AG04450 (cell line): ENCODE measurements at regions of chr11 and their contacts with region 1.

Region 1: DNA sequence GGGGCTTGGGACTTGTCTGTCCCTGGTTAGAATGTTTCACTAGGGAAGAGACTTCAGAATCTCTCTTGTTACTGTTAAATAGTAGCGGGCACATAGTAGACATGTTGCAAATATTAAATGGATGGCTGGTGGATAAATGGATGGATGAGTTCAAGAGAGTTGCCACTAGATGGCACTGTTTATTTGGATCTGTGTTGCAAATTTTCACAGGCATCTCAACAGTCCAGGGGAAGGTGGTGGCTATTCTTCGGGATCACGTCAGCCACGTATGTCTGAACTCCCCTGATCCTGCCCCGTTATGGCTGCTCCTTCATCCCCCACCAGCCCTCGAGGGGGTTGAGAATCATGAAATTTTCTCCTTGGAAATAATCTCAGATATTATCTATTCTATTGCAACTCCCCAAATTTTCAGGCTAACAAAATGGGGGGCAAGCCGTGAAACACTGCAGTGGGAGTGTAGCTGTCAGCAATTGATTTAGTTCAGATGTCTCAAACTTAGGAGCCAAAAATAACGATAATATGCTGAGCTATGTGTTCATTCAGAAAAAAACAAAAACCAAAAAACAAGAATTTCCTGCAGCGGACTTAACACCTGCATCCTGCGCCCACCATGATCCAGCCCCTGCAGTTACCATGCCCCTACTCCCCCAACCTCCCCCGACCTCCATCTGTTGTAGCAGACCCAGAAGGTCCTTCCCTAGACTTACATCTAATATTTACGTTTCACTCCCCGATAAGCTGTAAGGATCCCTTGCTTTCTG is 29.1 kb upstream of the BIRC3 start:
- DNase-seq: peak; percentile 55
- H3K4me3 ChIP-seq: peak overlapping the region; percentile 38
- H3K27ac ChIP-seq: no peak overlapping the region
- H3K27me3 ChIP-seq: no peaks in the 10 kb centered on the region
- CTCF ChIP-seq: peak; percentile 72

Region 2: GRCh38 chr11:102187416-102188151 is 100.6 kb before region 1 on chr11:
- CTCF ChIA-PET with region 1: no interaction called
- POLR2A ChIA-PET with region 1: no interaction called
- DNase-seq: no peak
- H3K4me3 ChIP-seq: no peak overlapping the region
- H3K27ac ChIP-seq: no peak overlapping the region
- H3K27me3 ChIP-seq: no peaks in the 10 kb centered on the region
- CTCF ChIP-seq: no peak

Region 3: GRCh38 chr11:102244681-102245409 is 43.3 kb before region 1 on chr11:
- CTCF ChIA-PET with region 1: no interaction called
- POLR2A ChIA-PET with region 1: no interaction called
- DNase-seq: no peak
- H3K4me3 ChIP-seq: no peak overlapping the region
- H3K27ac ChIP-seq: no peak overlapping the region
- H3K27me3 ChIP-seq: no peaks in the 10 kb centered on the region
- CTCF ChIP-seq: no peak

Region 4: GRCh38 chr11:102312667-102313066 is 24.5 kb after region 1 on chr11:
- CTCF ChIA-PET with region 1: interaction called, 10 read pairs
- POLR2A ChIA-PET with region 1: no interaction called
- DNase-seq: no peak
- H3K4me3 ChIP-seq: no peak overlapping the region
- H3K27ac ChIP-seq: no peak overlapping the region
- H3K27me3 ChIP-seq: no peaks in the 10 kb centered on the region
- CTCF ChIP-seq: no peak

Region 5: DNA sequence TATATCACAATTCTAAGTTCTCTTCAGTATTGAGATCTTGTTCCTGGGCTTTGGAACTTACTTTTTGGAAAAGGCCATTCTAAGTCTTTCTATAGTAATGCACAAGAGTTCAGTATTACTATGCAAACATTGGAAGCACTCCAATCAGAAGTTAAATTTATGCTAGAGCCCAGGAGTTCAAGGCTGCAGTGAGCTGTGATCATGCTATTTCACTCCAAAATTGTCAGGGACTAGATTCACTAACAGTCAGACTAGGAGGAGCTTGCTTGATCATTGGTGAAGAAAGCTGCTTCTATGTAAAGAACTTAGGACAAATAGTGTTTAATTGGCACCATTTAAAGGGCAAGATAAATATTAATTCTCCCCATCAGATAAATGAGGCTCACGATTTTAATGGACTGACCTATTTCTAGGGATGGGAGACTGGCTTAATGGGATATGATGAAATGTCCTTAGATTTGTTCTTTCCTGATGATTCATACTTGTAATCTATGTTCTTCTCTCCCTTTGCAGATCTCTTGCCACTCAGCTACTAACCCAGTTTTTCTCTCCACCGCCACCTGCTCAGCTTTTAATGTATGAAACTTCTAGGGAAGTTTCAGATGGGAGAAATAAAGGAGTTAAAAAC is 197.1 kb after region 1 on chr11:
- CTCF ChIA-PET with region 1: no interaction called
- POLR2A ChIA-PET with region 1: no interaction called
- DNase-seq: no peak
- H3K4me3 ChIP-seq: no peak overlapping the region
- H3K27ac ChIP-seq: no peak overlapping the region
- H3K27me3 ChIP-seq: peaks cover 2% of the 10 kb centered on the region
- CTCF ChIP-seq: no peak

Region 6: DNA sequence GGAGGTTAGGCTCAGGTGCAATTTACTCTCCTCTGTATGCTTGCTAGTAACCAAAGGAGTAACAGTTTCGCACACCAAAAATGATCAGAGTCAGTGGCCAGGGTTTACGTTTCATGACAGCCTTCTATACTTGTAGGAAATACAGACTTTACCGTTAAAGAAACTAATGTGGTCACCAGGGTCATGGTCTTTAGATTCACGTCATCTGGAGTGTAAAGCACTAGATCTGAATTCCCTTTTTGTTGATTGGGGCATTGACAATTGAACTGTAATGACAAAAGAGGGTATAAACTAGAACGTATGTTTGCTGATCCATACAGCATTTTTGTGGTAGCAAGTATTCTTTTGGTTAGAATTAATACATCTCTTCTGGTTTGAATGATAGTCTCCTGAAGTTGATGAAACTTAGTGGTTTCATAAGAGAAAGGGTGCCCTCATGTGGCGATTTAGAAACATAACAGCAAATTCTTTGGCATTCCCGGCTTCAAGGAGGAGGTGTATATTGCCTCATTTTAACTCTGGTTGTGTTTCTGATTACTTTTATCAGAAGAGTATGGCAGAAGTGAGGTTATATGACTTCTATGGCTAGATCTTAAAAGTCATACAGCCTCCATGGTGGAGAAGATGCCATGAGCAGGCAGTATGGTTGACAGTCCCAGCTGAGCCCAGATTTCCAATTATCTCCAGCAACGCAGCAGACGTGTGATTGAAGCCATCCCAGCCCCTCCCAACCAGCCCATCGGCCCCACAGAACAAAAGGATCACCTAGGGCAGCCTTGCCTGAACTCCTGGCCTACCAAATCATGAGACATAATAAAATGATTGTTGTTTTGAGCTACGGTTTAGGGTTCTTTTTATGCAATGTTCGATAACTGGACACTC is 207.3 kb after region 1 on chr11:
- CTCF ChIA-PET with region 1: interaction called, 10 read pairs
- POLR2A ChIA-PET with region 1: no interaction called
- DNase-seq: peak; percentile 75
- H3K4me3 ChIP-seq: no peak overlapping the region
- H3K27ac ChIP-seq: no peak overlapping the region
- H3K27me3 ChIP-seq: peaks cover 3% of the 10 kb centered on the region
- CTCF ChIP-seq: peak; percentile 62

Region 7: DNA sequence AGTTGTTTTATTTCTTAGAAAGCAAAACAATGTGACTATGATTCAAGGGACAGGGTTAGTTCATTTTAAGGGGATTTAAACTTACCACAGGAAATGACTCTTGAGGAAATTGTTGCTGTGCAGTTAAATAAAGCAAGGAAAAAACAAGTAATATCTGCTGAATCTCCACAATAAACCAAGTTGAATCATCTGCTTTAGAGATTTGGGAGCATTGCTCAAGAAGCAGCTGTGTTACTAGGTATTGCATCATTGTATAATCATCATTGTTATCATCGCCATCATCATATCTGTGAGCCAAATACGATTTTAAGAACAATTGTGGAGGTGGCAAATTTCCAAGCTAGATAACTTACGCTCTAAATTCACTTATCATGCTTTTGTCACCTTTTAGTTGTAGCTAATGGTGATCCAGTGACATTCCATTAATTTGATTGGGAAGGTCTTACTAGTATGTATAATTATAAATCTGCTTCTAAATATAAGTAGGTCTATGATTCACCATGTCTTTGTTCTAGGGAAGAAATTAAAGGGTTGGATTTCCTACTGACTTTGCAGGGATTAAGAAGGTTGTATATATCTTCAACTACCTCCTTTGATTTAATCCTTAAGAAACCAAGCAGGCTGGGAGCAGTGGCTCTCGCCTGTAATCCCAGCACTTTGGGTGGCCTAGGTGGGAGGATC is 472.4 kb after region 1 on chr11:
- CTCF ChIA-PET with region 1: no interaction called
- POLR2A ChIA-PET with region 1: no interaction called
- DNase-seq: peak; percentile 88
- H3K4me3 ChIP-seq: no peak overlapping the region
- H3K27ac ChIP-seq: peak overlapping the region; percentile 71
- H3K27me3 ChIP-seq: no peaks in the 10 kb centered on the region
- CTCF ChIP-seq: no peak